ENCODE measurements at regions of chr7 and their contacts with region 1.

Region 1: GRCh38 chr7:135509903-135510602 is at the start of gene CNOT4:
- DNase-seq: peak; percentile 97 to 99
- ATAC-seq: peak; percentile 99
- H3K4me3 ChIP-seq: peak within 1 kb of the TSS; percentile 97
- H3K27ac ChIP-seq: peak within 1 kb of the TSS; percentile 29 to 93
- H3K4me1 ChIP-seq: peaks cover 0 to 1% of the 10 kb centered on the region in 2 donors
- H3K27me3 ChIP-seq: no peaks in the 10 kb centered on the region
- total RNA-seq, gene CNOT4: 29.0 to 35.9 TPM

Region 2: DNA sequence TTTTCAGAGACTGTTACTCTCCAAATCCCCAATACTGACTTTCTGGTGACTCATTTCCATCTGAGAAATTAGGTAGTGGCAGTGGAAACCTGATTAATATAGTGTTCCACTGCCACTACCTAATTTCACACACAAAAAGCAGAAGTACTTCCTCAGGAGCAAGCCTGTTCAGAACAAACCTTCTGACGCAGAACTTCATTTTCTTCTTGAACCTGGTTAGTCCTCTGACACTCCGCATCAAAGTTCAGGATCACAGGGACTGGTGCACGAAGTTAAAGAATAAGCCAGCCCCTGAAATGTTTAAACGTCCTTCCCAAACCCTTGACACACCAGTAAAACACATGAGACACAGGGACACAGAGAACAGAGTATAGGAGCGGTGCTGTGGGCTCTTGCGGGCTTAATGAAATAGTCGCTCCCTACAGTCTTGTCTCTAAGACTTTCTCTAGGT is 303.1 kb before region 1 on chr7:
- intact Hi-C with region 1: no loop called
- DNase-seq: no peak
- ATAC-seq: no peak
- H3K4me3 ChIP-seq: no peak overlapping the region
- H3K27ac ChIP-seq: no peak overlapping the region
- H3K4me1 ChIP-seq: peaks cover 0 to 4% of the 10 kb centered on the region in 2 donors
- H3K27me3 ChIP-seq: no peaks in the 10 kb centered on the region

Region 3: DNA sequence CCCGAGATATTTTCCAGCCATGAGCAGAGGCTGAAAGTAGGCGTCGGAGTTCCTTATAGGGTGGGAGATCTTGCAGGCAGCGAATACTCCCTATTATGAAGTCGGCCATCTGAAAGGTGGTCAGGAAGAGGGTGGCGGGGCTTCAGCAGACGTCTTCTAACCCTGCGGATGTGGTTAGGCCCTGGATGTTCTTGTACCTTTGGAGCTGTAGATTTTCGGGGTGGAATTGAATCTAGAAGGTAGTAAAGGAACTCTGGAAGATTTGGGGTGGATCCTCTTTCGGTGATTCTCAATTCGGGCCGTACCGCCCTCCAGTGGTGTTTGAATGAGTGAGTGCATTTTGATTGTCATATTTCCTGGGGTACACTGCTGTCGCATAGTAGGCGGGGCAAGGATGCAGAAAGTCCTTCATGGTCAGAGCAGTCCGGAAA is 48.3 kb after region 1 on chr7:
- intact Hi-C with region 1: loop called in 1 of 2 experiments (anchors 5 kb)
- DNase-seq: peak in 1 of 2 donors; percentile 62
- ATAC-seq: peak; percentile 71
- H3K4me3 ChIP-seq: peak overlapping the region; percentile 64 to 70
- H3K27ac ChIP-seq: peak overlapping the region in 1 of 2 donors; percentile 98
- H3K4me1 ChIP-seq: no peaks in the 10 kb centered on the region
- H3K27me3 ChIP-seq: no peaks in the 10 kb centered on the region

Region 4: GRCh38 chr7:135634191-135634878 is 124.3 kb after region 1 on chr7:
- intact Hi-C with region 1: no loop called
- DNase-seq: no peak
- ATAC-seq: no peak
- H3K4me3 ChIP-seq: no peak overlapping the region
- H3K27ac ChIP-seq: no peak overlapping the region
- H3K4me1 ChIP-seq: no peaks in the 10 kb centered on the region
- H3K27me3 ChIP-seq: no peaks in the 10 kb centered on the region